CD8-positive, alpha-beta memory T cell (primary cell): ENCODE measurements at regions of chr6 and their contacts with region 1.

Region 1: DNA sequence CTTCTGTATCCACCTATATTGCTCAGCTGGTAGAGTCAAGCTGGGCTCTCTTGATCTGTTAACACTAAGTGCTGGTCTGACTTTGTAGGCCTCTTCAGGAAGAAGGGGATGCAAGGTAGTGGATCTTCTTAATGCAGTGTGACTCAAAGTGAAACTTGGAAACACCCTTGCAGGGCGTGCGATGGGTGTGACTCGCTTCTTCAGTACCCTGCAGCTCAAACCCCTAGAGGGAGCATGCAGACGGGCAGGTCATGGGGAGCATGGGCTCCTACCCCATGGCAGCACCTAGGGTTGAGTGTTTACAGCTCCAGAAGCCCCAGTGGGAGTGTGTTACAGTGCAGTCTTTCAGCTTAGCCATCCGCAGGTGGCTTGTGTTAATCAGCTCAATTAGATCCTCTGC is 757 bp upstream of the SAMD3 start:
- DNase-seq: peak; percentile 41 to 87 (median 54)
- H3K4me3 ChIP-seq: peak overlapping the region; percentile 60
- H3K4me3 Mint-ChIP-seq: peak overlapping the region; percentile 90 to 96 (median 95)
- H3K27ac ChIP-seq: peak overlapping the region; percentile 64
- H3K27ac Mint-ChIP-seq: peak overlapping the region; percentile 82 to 97 (median 94)
- H3K4me1 ChIP-seq: peaks cover 25% of the 10 kb centered on the region
- H3K4me1 Mint-ChIP-seq: peaks cover 39 to 61% (median 59%) of the 10 kb centered on the region in 3 donors
- H3K27me3 ChIP-seq: no peaks in the 10 kb centered on the region
- H3K27me3 Mint-ChIP-seq: no peaks in the 10 kb centered on the region

Region 2: DNA sequence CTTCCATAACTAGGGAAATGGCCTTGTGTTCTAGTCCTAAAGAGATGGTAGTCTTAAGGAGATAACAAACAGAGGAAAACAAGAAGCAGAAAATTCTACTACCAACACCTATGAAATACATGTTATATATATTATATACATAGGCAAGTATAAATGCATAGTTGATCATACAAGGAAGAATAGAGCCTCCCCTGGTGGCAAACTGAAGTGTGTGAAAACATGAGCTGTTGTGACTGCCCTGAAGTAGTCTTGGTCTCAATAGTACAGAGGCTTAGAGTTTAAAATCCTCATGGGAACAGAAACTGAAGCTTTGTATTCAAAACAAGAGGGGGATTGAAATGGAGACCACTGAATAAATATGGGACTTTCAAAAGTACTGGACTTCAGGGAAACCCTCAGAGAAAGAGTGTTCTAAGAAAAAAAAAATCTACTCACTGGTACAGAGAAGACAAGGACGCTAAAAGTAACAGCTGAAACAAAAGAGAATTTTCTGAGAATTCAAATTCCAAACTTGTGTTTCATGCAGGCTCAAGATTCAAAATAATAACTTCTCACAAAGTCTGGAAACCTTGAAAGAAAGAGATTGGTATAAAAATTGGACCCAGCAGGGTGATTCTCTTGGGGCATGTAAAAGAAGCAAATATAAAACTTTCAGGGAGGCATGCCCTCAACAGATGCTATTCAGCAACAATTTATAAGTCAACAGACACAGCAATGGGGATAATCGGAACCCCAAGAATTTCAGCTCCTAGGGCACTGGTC is 58.9 kb after region 1 on chr6:
- CTCF ChIA-PET with region 1: interaction called, 24 read pairs
- POLR2A ChIA-PET with region 1: no interaction called
- DNase-seq: peak in 3 of 5 donors; percentile 15 to 60 (median 34)
- H3K4me3 ChIP-seq: no peak overlapping the region
- H3K4me3 Mint-ChIP-seq: peak overlapping the region in 1 of 7 donors; percentile 22
- H3K27ac ChIP-seq: no peak overlapping the region
- H3K27ac Mint-ChIP-seq: peak overlapping the region in 4 of 8 donors; percentile 31 to 87 (median 58)
- H3K4me1 ChIP-seq: peaks cover 5% of the 10 kb centered on the region
- H3K4me1 Mint-ChIP-seq: peaks cover 10 to 16% (median 16%) of the 10 kb centered on the region in 3 donors
- H3K27me3 ChIP-seq: no peaks in the 10 kb centered on the region
- H3K27me3 Mint-ChIP-seq: no peaks in the 10 kb centered on the region

Region 3: DNA sequence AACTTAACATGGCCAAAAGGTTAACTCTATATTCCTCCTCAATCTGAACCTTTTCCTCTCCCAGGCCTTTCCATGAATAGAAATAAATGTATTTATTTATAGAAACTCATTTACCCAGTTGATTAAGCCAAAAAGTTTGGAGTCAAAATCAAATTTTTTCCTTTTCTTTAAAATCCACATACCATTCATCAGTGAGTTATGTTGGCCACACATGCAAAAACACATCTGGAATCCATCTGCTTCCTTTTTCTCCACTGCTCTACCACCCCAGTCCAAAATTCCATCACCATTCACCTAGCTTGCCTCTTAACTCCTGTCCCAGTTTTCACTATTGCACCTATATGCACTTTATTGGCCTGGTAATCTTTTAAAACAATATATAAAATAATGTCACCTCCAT is 79.9 kb after region 1 on chr6:
- CTCF ChIA-PET with region 1: no interaction called
- POLR2A ChIA-PET with region 1: no interaction called
- DNase-seq: no peak
- H3K4me3 ChIP-seq: no peak overlapping the region
- H3K4me3 Mint-ChIP-seq: no peak overlapping the region
- H3K27ac ChIP-seq: no peak overlapping the region
- H3K27ac Mint-ChIP-seq: no peak overlapping the region
- H3K4me1 ChIP-seq: no peaks in the 10 kb centered on the region
- H3K4me1 Mint-ChIP-seq: no peaks in the 10 kb centered on the region
- H3K27me3 ChIP-seq: no peaks in the 10 kb centered on the region
- H3K27me3 Mint-ChIP-seq: no peaks in the 10 kb centered on the region

Region 4: GRCh38 chr6:130396722-130397121 is 173.2 kb after region 1 on chr6:
- CTCF ChIA-PET with region 1: no interaction called
- POLR2A ChIA-PET with region 1: no interaction called
- DNase-seq: no peak
- H3K4me3 ChIP-seq: peak overlapping the region; percentile 43
- H3K4me3 Mint-ChIP-seq: peak overlapping the region; percentile 46 to 90 (median 85)
- H3K27ac ChIP-seq: no peak overlapping the region
- H3K27ac Mint-ChIP-seq: peak overlapping the region in 7 of 8 donors; percentile 48 to 87 (median 82)
- H3K4me1 ChIP-seq: no peaks in the 10 kb centered on the region
- H3K4me1 Mint-ChIP-seq: peaks cover 16 to 50% (median 45%) of the 10 kb centered on the region in 3 donors
- H3K27me3 ChIP-seq: no peaks in the 10 kb centered on the region
- H3K27me3 Mint-ChIP-seq: peaks cover 0 to 2% of the 10 kb centered on the region in 2 donors

Region 5: DNA sequence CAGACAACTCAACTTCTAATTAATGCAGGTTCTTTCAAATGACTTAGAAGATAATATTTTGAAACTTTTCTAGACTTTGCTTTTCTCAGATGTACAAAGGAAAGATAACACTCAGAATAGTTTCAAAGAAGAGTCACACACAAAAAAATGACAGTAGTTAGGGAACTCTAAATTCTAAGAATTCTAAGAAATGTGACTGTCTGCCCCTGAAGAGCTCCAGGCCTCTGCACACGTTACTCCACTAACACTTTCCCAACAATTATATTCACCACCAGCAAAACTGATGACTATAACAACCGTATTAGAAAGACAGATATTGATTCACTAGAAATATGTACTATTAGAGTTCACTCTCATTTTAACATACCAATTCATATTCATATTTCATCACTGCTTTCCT is 470.4 kb after region 1 on chr6:
- CTCF ChIA-PET with region 1: no interaction called
- POLR2A ChIA-PET with region 1: no interaction called
- DNase-seq: no peak
- H3K4me3 ChIP-seq: no peak overlapping the region
- H3K4me3 Mint-ChIP-seq: no peak overlapping the region
- H3K27ac ChIP-seq: no peak overlapping the region
- H3K27ac Mint-ChIP-seq: peak overlapping the region in 4 of 8 donors; percentile 3 to 41 (median 20)
- H3K4me1 ChIP-seq: peaks cover 18% of the 10 kb centered on the region
- H3K4me1 Mint-ChIP-seq: peaks cover 6 to 45% (median 32%) of the 10 kb centered on the region in 3 donors
- H3K27me3 ChIP-seq: no peaks in the 10 kb centered on the region
- H3K27me3 Mint-ChIP-seq: peaks cover 0 to 2% of the 10 kb centered on the region in 2 donors